ENCODE measurements at regions of chr22 and their contacts with region 1.

Region 1: GRCh38 chr22:33803371-33804282 is 116.6 kb downstream of the LARGE1 start:
- DNase-seq: no peak
- ATAC-seq: no peak
- H3K4me3 ChIP-seq: no peak overlapping the region
- H3K27ac ChIP-seq: no peak overlapping the region
- H3K4me1 ChIP-seq: peaks cover 3 to 4% of the 10 kb centered on the region in 2 donors
- H3K27me3 ChIP-seq: no peaks in the 10 kb centered on the region

Region 2: DNA sequence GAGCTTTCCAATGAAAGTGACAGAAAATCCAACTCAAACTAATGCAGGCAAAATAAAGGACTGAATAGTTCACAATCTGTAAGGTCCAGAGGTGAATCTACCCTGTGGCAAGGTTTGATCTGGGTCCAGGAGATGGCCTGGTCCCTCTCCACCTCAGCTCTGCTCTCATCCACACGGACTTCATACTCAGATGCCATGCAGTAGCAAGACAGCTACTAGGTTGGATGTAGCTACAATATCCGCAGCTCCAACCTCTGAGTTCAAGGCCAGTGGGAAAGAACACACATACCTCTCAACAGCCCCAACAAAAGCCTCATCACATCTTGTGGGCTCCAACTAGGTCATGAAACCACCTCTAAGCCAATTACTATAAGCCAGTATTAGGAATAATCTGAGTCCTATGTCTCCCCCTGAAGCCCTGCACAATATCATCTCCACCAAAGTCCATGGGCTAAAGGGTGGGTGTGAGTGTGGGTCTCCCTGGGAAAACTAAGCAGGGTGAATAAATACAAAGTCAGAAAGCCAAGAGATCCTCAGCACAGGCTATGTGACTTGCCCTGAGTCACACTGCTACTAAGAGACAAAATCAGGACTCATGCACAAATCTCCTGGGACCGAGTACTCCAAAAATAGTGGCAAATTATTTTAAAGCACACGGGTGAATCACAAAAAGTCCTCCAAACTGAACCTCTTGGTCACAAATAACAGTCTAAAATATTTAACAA is 37.8 kb after region 1 on chr22:
- intact Hi-C with region 1: no loop called
- DNase-seq: no peak
- ATAC-seq: peak; percentile 63
- H3K4me3 ChIP-seq: peak overlapping the region in 1 of 2 donors; percentile 36
- H3K27ac ChIP-seq: peak overlapping the region; percentile 67 to 82
- H3K4me1 ChIP-seq: peaks cover 8 to 12% of the 10 kb centered on the region in 2 donors
- H3K27me3 ChIP-seq: no peaks in the 10 kb centered on the region

Region 3: DNA sequence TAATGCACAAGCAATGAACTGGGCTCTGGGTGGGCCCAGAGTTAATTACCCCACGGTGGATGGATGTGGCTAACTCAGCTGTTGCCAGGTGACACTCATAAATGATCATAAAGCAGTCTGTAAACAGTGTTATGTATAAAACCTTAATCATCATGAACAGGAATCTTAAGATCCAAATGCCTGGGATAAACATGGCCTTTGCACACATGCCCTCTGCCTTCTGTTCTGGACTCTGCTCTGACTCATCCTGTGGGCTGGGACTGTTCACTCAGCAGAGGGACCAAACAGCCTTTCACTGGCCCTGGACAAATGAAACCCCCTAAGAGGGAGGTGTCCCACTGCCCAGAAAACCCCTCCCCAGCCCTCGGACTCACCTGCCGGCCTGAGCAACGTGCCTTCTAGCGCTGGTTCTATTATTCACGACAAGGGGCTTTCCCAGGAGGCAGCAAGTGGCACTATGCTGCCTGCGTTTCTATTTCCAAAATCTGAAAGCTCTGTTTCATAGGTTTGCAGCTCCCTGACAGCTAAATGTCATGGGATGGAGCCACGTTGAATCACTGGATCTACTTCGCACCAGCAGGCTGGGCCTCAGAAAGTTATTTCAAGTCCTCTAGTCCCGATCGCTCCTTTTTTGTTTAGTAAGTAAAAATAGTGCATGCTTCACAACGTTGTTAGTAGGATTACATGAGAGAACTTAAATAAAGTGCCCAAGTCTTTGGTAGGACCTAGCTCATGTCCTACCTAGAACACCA is 63.7 kb after region 1 on chr22:
- intact Hi-C with region 1: loop called in 1 of 2 experiments (anchors 10 kb)
- DNase-seq: no peak
- ATAC-seq: peak; percentile 60
- H3K4me3 ChIP-seq: no peak overlapping the region
- H3K27ac ChIP-seq: peak overlapping the region; percentile 70 to 84
- H3K4me1 ChIP-seq: peaks cover 1 to 6% of the 10 kb centered on the region in 2 donors
- H3K27me3 ChIP-seq: no peaks in the 10 kb centered on the region

Region 4: GRCh38 chr22:33932997-33933396 is 129.4 kb after region 1 on chr22:
- intact Hi-C with region 1: no loop called
- DNase-seq: no peak
- ATAC-seq: no peak
- H3K4me3 ChIP-seq: no peak overlapping the region
- H3K27ac ChIP-seq: no peak overlapping the region
- H3K4me1 ChIP-seq: no peaks in the 10 kb centered on the region
- H3K27me3 ChIP-seq: no peaks in the 10 kb centered on the region

Measured in aorta (tissue), 5 donors.